Panc1 (cell line): ENCODE measurements at regions of chr1 and their contacts with region 1.

Region 1: GRCh38 chr1:22930235-22930912 is 42.3 kb downstream of the LACTBL1 start:
- DNase-seq: no peak
- ATAC-seq: peak; percentile 85
- H3K4me3 ChIP-seq: no peak overlapping the region
- H3K27ac ChIP-seq: no peak overlapping the region
- H3K4me1 ChIP-seq: no peaks in the 10 kb centered on the region
- H3K27me3 ChIP-seq: no peaks in the 10 kb centered on the region
- CTCF ChIP-seq: peak; percentile 92

Region 2: DNA sequence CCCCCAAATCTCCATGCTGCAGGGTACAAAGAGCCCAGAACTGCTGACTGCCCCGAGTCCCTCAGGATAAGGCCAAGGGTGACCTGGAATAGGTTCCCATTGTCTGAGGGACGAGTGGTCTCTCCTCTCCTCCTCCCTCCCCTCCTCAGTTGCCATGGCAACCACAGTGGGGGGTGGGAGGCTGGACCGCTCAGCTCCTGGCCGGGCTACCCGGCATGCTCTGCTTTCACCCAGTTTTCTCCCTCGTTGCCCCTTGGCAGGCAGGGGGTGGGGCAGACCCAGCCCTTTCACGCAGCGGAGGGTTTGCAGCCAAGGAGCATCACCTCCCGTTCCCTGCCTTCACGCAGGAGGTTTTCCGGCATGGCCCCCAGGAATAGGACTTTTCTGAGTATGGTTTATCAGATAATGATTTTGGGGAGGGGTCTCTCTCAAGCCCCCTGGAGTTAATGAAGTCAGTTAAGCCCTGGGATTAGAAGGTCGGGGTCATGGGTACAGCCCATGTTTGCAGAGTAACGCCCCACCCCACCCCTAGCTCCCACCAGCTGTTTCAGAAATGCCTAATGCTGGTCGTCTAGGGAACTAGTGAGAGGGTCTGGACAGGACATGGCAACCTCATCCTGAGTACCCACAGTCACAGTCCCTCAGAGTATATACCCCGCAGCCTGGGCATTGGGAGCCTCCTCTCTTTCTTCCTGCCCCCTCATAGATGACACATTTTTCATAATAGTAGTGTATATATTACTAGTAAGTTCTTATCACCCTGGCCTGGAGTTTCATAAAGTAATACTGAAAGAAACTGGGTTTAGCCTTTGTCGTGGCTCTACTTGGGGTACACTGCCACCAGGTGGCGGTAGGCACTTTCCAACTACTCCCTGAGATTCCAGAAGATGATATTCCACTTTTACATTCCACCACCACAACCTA is 256.6 kb before region 1 on chr1:
- CTCF ChIA-PET with region 1: interaction called, 11 read pairs
- POLR2A ChIA-PET with region 1: no interaction called
- in situ Hi-C with region 1: no loop called
- intact Hi-C with region 1: loop called (anchors 5 kb)
- DNase-seq: peak; percentile 36
- ATAC-seq: peak; percentile 80; the same call in 1 of the 2 replicates
- H3K4me3 ChIP-seq: no peak overlapping the region
- H3K27ac ChIP-seq: no peak overlapping the region
- H3K4me1 ChIP-seq: no peaks in the 10 kb centered on the region
- H3K27me3 ChIP-seq: no peaks in the 10 kb centered on the region
- CTCF ChIP-seq: peak; percentile 86

Region 3: DNA sequence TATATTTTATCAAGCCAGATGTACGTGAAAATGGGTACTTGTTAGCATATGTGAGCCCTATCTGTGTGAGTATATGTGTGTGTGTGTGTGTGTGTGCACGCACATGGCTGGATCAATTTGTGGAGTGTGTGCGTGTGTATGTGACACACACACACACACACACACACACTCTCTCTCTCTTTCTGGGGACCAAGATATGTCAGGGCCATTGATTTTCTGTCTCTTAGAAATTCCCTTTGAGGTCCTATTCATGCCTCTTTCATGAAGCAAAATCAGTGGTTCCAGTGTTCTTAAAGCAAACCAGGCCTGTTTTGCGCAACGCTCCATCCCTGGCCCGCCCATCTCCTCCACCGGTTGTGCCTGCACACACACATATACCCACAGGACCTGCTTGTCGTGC is 129.7 kb before region 1 on chr1:
- CTCF ChIA-PET with region 1: interaction called, 10 read pairs
- POLR2A ChIA-PET with region 1: no interaction called
- in situ Hi-C with region 1: no loop called
- intact Hi-C with region 1: no loop called
- DNase-seq: no peak
- ATAC-seq: no peak
- H3K4me3 ChIP-seq: no peak overlapping the region
- H3K27ac ChIP-seq: no peak overlapping the region
- H3K4me1 ChIP-seq: no peaks in the 10 kb centered on the region
- H3K27me3 ChIP-seq: no peaks in the 10 kb centered on the region
- CTCF ChIP-seq: no peak